T-cell (primary cell): ENCODE measurements at regions of chr3 and their contacts with region 1.

Region 1: GRCh38 chr3:138137861-138138260 is 5.7 kb upstream of the A4GNT start:
- DNase-seq: no peak
- ATAC-seq: no peak
- H3K4me3 ChIP-seq: no peak overlapping the region
- H3K4me3 Mint-ChIP-seq: no peak overlapping the region
- H3K27ac ChIP-seq: no peak overlapping the region
- H3K27ac Mint-ChIP-seq: no peak overlapping the region
- H3K4me1 ChIP-seq: no peaks in the 10 kb centered on the region
- H3K4me1 Mint-ChIP-seq: no peaks in the 10 kb centered on the region
- H3K27me3 ChIP-seq: no peaks in the 10 kb centered on the region
- H3K27me3 Mint-ChIP-seq: peaks cover 8 to 14% of the 10 kb centered on the region in 2 donors

Region 2: DNA sequence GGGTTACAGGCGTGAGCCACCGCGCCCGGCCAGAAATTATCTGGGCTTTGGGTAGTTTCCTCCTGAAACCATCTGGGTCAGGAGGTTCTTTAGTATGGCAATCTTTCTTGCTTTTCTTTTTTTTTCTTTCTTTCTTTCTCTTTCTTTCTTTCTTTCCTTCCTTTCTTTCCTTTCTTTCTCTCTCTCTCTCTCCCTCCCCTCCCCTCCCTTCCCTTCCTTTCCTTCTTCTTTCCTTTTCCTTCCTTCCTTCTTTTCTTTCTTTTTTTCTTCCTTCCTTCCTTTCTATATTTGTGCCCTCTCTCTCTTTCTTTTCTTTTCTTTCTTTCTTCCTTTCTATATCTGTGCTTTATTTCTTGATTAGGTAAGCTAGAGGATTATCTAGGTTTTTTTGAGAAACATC is 19.9 kb after region 1 on chr3:
- CTCF ChIA-PET with region 1: interaction called in 1 of 2 experiments, 10 read pairs
- POLR2A ChIA-PET with region 1: interaction called in 1 of 2 experiments, 4 read pairs
- DNase-seq: no peak
- ATAC-seq: no peak
- H3K4me3 ChIP-seq: no peak overlapping the region
- H3K4me3 Mint-ChIP-seq: no peak overlapping the region
- H3K27ac ChIP-seq: no peak overlapping the region
- H3K27ac Mint-ChIP-seq: no peak overlapping the region
- H3K4me1 ChIP-seq: no peaks in the 10 kb centered on the region
- H3K4me1 Mint-ChIP-seq: no peaks in the 10 kb centered on the region
- H3K27me3 ChIP-seq: peaks cover 0 to 2% of the 10 kb centered on the region in 2 experiments
- H3K27me3 Mint-ChIP-seq: peaks cover 0 to 1% of the 10 kb centered on the region in 2 donors